Activated B cell treated with CpG ODN at 0.5 μM for 24 hours (primary cell): ENCODE measurements at regions of chr10 and their contacts with region 1.

Region 1: DNA sequence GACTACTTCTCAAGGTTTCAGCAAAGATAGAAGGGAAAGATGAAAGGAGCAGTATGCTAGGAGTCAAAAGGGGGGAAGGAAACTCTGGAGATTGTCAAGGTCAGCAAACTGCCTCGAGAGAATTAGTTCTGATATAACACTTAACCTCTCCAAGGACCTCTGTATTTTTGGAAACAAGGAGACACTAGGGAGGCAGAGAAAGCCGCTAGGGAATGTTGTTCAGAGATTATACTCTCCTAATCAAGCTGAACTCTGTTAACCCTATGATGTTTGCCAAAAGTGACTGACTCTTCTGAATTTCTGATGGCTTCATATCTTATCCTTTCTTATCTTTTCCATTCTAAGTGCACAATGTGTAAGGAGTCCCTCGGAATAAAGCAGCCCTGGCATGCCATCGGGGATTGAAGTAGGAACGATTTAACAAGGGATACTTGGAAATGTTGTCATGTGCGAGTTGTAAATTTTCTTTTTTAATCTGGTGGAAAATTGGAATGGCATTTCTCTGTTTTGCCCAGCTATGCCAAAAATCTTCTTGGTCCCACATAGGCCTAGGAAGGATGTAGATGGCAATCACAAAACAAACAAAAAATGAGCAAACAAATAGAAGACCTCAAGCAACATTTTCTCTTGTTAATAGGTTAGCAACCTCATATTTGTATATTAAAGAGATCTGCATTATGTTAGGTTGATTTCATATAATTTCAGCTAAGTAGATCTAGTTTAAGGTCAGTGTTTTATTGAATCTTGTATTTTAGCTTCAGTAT is 27.3 kb downstream of the CREM start:
- DNase-seq: no peak
- ATAC-seq: no peak
- H3K4me3 Mint-ChIP-seq: no peak overlapping the region
- H3K27ac Mint-ChIP-seq: no peak overlapping the region
- H3K4me1 Mint-ChIP-seq: peaks cover 34% of the 10 kb centered on the region
- H3K27me3 Mint-ChIP-seq: no peaks in the 10 kb centered on the region
- CTCF ChIP-seq: no peak

Region 2: GRCh38 chr10:34538281-34538829 is 615.5 kb before region 1 on chr10:
- CTCF ChIA-PET with region 1: no interaction called
- POLR2A ChIA-PET with region 1: no interaction called
- intact Hi-C with region 1: no loop called
- DNase-seq: no peak
- ATAC-seq: no peak
- H3K4me3 Mint-ChIP-seq: peak overlapping the region; percentile 42
- H3K27ac Mint-ChIP-seq: no peak overlapping the region
- H3K4me1 Mint-ChIP-seq: peaks cover 15% of the 10 kb centered on the region
- H3K27me3 Mint-ChIP-seq: no peaks in the 10 kb centered on the region
- CTCF ChIP-seq: no peak

Region 3: GRCh38 chr10:35090162-35090954 is 63.5 kb before region 1 on chr10 and contains the start of gene CUL2:
- CTCF ChIA-PET with region 1: no interaction called
- POLR2A ChIA-PET with region 1: interaction called, 3 read pairs
- intact Hi-C with region 1: loop called (anchors 1 kb)
- DNase-seq: peak; percentile 89
- ATAC-seq: peak; percentile 96
- H3K4me3 Mint-ChIP-seq: peak within 1 kb of the TSS; percentile 98
- H3K27ac Mint-ChIP-seq: peak within 1 kb of the TSS; percentile 98
- H3K4me1 Mint-ChIP-seq: peaks cover 52% of the 10 kb centered on the region
- H3K27me3 Mint-ChIP-seq: peaks cover under 1% of the 10 kb centered on the region
- CTCF ChIP-seq: no peak
- total RNA-seq, gene CUL2: 32.7 and 33.7 TPM in 2 replicates

Region 4: GRCh38 chr10:35136263-35136815 is 17.6 kb before region 1 on chr10:
- CTCF ChIA-PET with region 1: interaction called, 3 read pairs
- POLR2A ChIA-PET with region 1: interaction called, 174 read pairs
- intact Hi-C with region 1: loop called (anchors 1 kb)
- DNase-seq: no peak
- ATAC-seq: peak; percentile 82
- H3K4me3 Mint-ChIP-seq: peak overlapping the region; percentile 69
- H3K27ac Mint-ChIP-seq: peak overlapping the region; percentile 89
- H3K4me1 Mint-ChIP-seq: peaks cover 45% of the 10 kb centered on the region
- H3K27me3 Mint-ChIP-seq: no peaks in the 10 kb centered on the region
- CTCF ChIP-seq: no peak

Region 5: DNA sequence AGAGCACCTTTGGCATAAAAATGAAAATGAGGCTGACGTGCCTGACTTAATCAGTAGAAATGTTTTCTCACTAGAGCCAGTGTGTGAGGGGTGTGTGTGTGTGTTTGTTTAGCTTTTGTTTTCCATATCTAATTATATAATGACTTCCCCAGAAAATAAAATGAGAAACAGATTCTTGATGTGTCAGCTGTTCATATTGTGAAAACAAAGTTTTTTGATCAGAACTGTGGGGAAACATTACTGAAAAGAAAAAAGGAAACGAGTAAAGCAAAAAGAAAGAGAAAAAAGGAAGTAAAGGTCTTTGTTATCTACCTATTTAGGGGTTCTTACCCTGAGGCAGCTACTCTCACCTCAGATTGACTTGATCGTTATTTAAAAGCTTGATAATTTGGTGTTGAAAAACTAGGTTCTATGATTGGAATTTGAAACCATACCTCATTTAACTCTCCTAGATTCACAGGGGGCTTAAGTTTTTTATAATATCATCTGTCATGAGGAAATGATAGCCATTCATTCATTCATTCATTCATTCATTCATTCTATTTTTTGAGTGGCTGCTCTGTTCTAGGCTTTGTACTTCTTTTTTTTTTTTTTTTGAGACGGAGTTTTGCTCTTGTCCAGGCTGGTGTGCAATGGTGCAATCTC is 30.8 kb after region 1 on chr10:
- CTCF ChIA-PET with region 1: no interaction called
- POLR2A ChIA-PET with region 1: interaction called, 11 read pairs
- intact Hi-C with region 1: no loop called
- DNase-seq: no peak
- ATAC-seq: peak; percentile 62
- H3K4me3 Mint-ChIP-seq: peak overlapping the region; percentile 44
- H3K27ac Mint-ChIP-seq: peak overlapping the region; percentile 71
- H3K4me1 Mint-ChIP-seq: peaks cover 27% of the 10 kb centered on the region
- H3K27me3 Mint-ChIP-seq: no peaks in the 10 kb centered on the region
- CTCF ChIP-seq: no peak

Region 6: DNA sequence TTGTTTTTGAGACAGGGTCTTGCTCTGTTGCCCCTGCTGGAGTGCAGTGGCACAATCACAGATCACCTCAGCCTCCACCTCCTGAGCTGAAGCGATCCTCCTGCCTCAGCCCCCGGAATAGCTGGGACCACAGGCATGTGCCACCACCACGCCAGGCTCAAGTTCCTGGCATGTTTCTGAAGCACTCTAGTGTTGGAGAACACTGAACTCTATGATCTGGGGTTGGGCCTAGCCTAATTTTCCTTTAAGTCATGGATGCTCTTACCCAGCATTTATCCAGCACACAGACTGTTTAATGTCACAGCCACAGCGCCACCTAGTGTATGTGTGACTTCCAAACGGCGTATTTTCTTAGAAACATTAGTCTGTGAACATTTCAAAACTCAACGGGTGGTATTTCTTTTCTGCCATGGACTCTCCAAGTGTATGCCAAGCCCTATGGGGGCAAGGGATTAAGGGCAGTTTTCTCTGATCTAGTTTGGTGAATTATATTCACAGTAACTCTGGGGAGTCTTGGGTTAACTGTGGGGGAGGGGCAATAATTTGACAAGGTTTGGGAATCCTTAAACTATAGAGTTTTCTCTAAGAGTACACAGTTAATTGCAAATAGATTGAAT is 64.5 kb after region 1 on chr10:
- CTCF ChIA-PET with region 1: no interaction called
- POLR2A ChIA-PET with region 1: no interaction called
- intact Hi-C with region 1: loop called (anchors 1 kb)
- DNase-seq: peak; percentile 44
- ATAC-seq: peak; percentile 82
- H3K4me3 Mint-ChIP-seq: no peak overlapping the region
- H3K27ac Mint-ChIP-seq: no peak overlapping the region
- H3K4me1 Mint-ChIP-seq: peaks cover 12% of the 10 kb centered on the region
- H3K27me3 Mint-ChIP-seq: peaks cover 9% of the 10 kb centered on the region
- CTCF ChIP-seq: no peak